ENCODE measurements at regions of chr20 and their contacts with region 1.

Region 1: DNA sequence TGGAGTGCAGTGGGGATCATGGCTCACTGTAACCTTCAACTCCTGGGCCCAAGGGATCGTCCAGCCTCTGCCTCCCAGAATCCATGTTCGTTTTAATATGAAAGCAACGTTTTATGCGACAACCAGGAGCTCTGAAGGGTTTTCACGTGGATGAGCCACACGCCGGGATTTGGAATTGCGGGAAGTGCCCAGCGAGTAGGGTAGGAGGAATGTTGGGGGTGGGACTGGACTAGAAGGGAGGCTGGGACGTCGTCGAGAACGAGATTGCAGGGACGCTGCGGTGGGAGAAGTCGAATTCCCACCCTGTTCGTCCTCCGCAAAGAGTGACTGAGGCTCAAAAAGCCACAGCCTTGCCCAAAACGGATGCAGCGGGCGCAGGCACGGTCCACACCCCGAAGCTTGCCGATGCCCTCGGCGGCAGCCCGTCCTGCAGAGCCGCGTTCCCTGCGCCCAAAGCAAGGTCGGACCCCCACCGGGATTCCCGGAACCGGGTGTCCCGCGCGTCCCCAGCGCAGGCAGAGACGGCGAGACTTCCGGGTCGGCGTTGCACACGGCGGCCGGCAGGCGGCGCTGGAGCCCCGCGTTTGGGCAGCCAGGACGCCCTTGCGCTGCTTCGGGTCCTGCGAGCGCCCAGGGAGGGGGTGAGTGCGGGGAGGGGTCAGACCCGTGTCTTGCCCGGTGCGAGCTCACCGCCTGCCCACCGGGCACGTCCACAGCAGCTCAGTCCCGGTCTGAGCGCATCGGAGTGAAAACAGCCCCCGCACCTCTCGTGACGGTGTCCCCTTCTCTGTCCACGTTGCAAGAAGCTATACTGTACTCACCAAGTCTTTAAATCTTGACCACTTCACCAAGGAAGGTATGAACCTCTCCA is 87.8 kb downstream of the DHX35 start:
- DNase-seq: peak; percentile 74
- ATAC-seq: peak; percentile 86
- H3K4me3 Mint-ChIP-seq: peak overlapping the region; percentile 79
- H3K27ac Mint-ChIP-seq: peak overlapping the region; percentile 68
- H3K4me1 Mint-ChIP-seq: peaks cover 6% of the 10 kb centered on the region
- H3K27me3 Mint-ChIP-seq: no peaks in the 10 kb centered on the region
- CTCF ChIP-seq: peak; percentile 98

Region 2: GRCh38 chr20:38920851-38921250 is 129.1 kb before region 1 on chr20:
- CTCF ChIA-PET with region 1: interaction called, 73 read pairs
- POLR2A ChIA-PET with region 1: interaction called, 4 read pairs
- intact Hi-C with region 1: loop called (anchors 2 kb)
- DNase-seq: no peak
- ATAC-seq: no peak
- H3K4me3 Mint-ChIP-seq: no peak overlapping the region
- H3K27ac Mint-ChIP-seq: no peak overlapping the region
- H3K4me1 Mint-ChIP-seq: peaks cover 3% of the 10 kb centered on the region
- H3K27me3 Mint-ChIP-seq: no peaks in the 10 kb centered on the region
- CTCF ChIP-seq: no peak

Region 3: DNA sequence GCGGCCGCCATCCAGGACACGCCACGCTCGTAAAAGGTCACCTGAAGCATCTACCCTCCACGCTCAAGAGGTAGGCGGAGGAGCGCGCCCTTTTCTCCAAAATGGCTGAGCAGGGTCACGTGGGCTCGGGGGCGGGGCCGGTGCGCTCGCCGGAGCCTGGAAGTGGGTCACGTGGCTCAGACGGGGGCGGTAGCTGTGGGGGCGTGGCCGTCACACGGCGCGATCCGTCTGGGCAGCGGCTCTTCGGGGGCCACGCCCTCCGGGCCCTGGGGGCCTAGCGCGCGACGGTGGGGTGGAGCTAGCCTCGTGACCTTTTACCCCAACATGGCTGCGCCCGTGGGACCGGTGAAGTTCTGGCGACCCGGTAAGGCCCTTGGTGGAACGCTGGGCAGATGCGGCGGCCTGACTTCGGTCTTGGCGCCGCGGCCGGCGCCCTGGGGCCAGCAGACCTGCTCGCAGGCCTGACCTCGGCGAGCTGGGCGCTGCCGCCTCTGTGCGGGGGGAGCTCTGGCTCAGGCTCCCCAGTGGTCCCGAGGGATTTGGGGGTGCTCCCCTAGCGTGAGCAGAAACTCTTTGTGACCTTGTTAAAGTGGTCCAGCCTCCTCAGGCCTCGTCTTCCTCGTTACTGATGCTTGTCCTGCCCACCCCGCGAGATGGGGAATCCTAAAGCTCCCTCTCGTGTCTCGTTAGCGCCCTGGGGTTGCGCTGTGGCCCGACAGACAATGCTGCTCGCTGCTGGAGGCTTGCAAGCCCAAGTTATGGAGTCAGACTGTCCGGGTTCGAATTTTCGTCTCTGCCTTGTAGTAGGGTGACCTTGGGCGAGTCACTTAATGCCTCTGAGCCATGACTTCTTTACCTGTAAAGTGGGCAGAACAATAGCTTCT is 87.6 kb before region 1 on chr20 and contains the start of gene DHX35:
- CTCF ChIA-PET with region 1: interaction called, 30 read pairs
- POLR2A ChIA-PET with region 1: interaction called, 4 read pairs
- intact Hi-C with region 1: no loop called
- DNase-seq: peak; percentile 99
- ATAC-seq: peak; percentile 99
- H3K4me3 Mint-ChIP-seq: peak within 1 kb of the TSS; percentile 87
- H3K27ac Mint-ChIP-seq: peak within 1 kb of the TSS; percentile 93
- H3K4me1 Mint-ChIP-seq: peaks cover 20% of the 10 kb centered on the region
- H3K27me3 Mint-ChIP-seq: no peaks in the 10 kb centered on the region
- CTCF ChIP-seq: peak; percentile 18
- total RNA-seq, gene DHX35: 12.2 to 12.6 TPM

Region 4: GRCh38 chr20:38990728-38991127 is 59.2 kb before region 1 on chr20:
- CTCF ChIA-PET with region 1: interaction called, 16 read pairs
- POLR2A ChIA-PET with region 1: no interaction called
- intact Hi-C with region 1: no loop called
- DNase-seq: no peak
- ATAC-seq: no peak
- H3K4me3 Mint-ChIP-seq: no peak overlapping the region
- H3K27ac Mint-ChIP-seq: no peak overlapping the region
- H3K4me1 Mint-ChIP-seq: peaks cover 13% of the 10 kb centered on the region
- H3K27me3 Mint-ChIP-seq: no peaks in the 10 kb centered on the region
- CTCF ChIP-seq: no peak

Region 5: DNA sequence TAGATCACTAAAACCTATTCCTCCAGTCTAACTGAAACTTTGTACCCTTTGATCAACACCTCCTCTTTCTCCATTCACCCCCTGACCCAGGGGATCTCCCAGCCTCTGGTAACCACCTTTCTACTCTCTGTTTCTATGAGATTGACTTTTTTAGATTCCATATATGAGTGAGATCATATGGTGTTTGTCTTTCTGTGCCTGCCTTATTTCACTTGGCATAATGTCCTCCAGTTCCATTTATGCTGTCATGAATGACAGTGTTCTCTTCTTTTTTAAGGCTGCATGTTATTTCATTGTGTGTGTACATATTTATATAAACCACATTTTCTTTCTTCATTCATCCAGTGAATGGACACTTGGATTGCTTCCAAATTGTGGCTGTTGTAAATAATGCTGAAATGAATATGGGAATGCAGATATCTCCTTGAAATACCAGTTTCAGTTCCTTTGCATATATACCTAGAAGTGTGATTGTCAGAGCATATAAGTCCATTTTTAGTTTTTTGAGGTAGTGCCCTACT is 30.1 kb before region 1 on chr20:
- CTCF ChIA-PET with region 1: interaction called, 16 read pairs
- POLR2A ChIA-PET with region 1: no interaction called
- intact Hi-C with region 1: no loop called
- DNase-seq: peak; percentile 79
- ATAC-seq: peak; percentile 90
- H3K4me3 Mint-ChIP-seq: peak overlapping the region; percentile 11
- H3K27ac Mint-ChIP-seq: peak overlapping the region; percentile 66
- H3K4me1 Mint-ChIP-seq: peaks cover 60% of the 10 kb centered on the region
- H3K27me3 Mint-ChIP-seq: no peaks in the 10 kb centered on the region
- CTCF ChIP-seq: no peak

Region 6: DNA sequence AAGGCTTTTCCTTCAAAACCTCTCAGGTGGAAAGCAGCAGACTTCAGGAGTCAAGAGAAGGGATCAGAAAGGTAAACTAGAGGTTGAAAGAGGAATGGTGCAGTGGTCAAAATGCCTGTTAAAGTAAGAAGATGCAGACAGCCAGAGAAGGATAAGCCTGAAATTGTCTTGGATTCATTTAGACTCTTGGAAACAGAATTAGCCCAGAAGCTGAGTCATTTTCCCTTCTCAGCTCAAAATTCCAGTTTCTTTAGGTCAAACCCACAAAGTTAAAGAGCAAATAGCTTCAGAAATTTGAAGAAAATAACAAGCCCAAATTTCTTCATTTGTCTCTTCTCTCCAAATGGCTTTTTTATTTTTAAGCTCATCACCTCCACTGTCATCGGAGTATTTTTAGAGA is 13.9 kb before region 1 on chr20:
- CTCF ChIA-PET with region 1: interaction called, 40 read pairs
- POLR2A ChIA-PET with region 1: no interaction called
- intact Hi-C with region 1: no loop called
- DNase-seq: no peak
- ATAC-seq: no peak
- H3K4me3 Mint-ChIP-seq: no peak overlapping the region
- H3K27ac Mint-ChIP-seq: no peak overlapping the region
- H3K4me1 Mint-ChIP-seq: no peaks in the 10 kb centered on the region
- H3K27me3 Mint-ChIP-seq: no peaks in the 10 kb centered on the region
- CTCF ChIP-seq: no peak

Region 7: GRCh38 chr20:39081255-39081654 is 31.3 kb after region 1 on chr20:
- CTCF ChIA-PET with region 1: interaction called, 153 read pairs
- POLR2A ChIA-PET with region 1: interaction called, 3 read pairs
- intact Hi-C with region 1: loop called (anchors 2 kb)
- DNase-seq: peak; percentile 89
- ATAC-seq: peak; percentile 86
- H3K4me3 Mint-ChIP-seq: no peak overlapping the region
- H3K27ac Mint-ChIP-seq: no peak overlapping the region
- H3K4me1 Mint-ChIP-seq: no peaks in the 10 kb centered on the region
- H3K27me3 Mint-ChIP-seq: peaks cover 10% of the 10 kb centered on the region
- CTCF ChIP-seq: peak; percentile 89

Region 8: DNA sequence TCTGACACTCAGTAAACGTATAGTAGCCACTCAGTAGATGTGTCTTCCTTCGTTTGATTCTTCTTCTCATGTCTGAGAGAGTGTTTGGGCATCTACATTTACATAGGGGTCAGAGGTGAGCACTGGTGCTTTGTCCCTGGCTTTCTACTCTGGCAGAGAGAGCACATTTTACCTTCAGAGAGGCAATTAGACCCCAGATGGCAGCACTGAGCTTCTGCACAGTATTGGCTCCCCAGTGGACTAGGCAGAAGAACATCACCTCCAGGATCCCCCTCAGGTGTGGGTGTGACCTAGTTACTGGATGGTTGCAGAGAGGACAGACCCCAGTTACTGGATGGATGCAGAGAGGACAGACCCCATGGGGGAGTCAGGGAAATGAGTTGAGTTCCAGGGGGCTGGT is 239.4 kb after region 1 on chr20:
- CTCF ChIA-PET with region 1: no interaction called
- POLR2A ChIA-PET with region 1: no interaction called
- intact Hi-C with region 1: no loop called
- DNase-seq: peak; percentile 20
- ATAC-seq: no peak
- H3K4me3 Mint-ChIP-seq: no peak overlapping the region
- H3K27ac Mint-ChIP-seq: no peak overlapping the region
- H3K4me1 Mint-ChIP-seq: no peaks in the 10 kb centered on the region
- H3K27me3 Mint-ChIP-seq: peaks cover 7% of the 10 kb centered on the region
- CTCF ChIP-seq: peak; percentile 24

Measured in activated CD8-positive, alpha-beta T cell treated with anti-CD3 and anti-CD28 coated beads for 36 hours (primary cell).